ENCODE measurements at regions of chr1 and their contacts with region 1.

Region 1: DNA sequence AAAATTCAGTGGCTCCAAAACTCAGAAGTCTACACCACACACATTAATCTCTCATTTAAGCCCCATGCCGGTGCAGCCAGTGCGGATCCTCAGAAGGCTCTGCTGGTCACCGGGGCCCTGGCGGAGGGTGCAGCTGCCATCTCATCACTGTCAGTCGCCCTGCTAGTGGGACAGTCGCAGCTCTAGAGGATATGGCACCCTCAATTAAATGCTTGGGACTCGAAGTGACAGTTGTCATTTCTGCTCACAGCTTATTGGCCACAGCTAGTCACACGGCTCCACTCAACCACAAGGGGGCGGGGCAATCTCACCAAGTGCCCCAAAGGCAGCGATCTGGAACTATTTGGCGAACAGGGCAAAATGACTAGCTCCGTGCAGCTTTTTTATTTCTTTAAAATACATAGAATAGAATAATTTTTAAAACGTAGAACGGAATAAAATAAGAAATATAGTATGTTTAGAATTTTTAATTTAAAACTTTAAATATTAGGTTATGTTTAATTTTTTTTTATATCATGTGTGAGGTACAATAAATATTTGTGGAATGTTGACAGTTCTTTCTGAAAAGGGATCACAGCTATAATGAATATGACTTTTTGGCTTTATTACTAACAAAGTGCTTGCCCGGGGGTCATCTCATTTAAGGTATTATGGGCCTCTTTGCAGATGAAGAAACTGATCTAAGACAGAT is 8.0 kb upstream of the MAN1C1 start:
- DNase-seq: peak; percentile 45
- H3K4me3 ChIP-seq: peak overlapping the region in 2 of 3 experiments; percentile 38 to 43
- H3K27ac ChIP-seq: no peak overlapping the region
- H3K4me1 ChIP-seq: peaks cover 3% of the 10 kb centered on the region
- H3K27me3 ChIP-seq: no peaks in the 10 kb centered on the region
- CTCF ChIP-seq: peak; percentile 17 to 65

Region 2: DNA sequence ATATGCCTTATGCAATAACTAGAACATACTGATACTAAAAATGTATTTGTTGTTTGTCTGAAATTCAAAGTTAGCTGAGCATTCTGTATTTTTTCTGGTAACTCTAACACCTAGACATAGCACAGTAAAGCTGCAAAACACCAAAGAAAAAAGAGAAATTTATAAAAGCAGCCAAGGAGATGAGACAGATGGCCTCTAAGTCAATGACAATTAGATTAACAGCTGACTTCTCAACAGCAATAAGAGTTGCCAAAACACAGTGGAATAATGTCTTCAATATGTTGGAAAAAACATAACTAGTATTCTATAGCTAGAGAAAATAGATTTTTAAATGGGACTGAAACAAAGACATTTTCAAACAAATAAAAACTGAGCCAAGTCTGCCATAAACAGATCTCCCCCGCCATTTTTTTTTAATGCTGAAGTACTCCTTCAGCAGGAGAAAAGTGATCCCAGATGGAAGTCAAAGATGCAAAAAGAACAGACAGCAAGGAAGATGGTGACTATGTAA is 457.6 kb before region 1 on chr1:
- CTCF ChIA-PET with region 1: no interaction called
- dilution Hi-C with region 1: no loop called
- in situ Hi-C with region 1: no loop called
- intact Hi-C with region 1: no loop called
- DNase-seq: no peak
- H3K4me3 ChIP-seq: no peak overlapping the region
- H3K27ac ChIP-seq: no peak overlapping the region
- H3K4me1 ChIP-seq: peaks cover 6% of the 10 kb centered on the region
- H3K27me3 ChIP-seq: no peaks in the 10 kb centered on the region
- CTCF ChIP-seq: no peak

Region 3: GRCh38 chr1:25562101-25562927 is 46.3 kb before region 1 on chr1:
- CTCF ChIA-PET with region 1: no interaction called
- dilution Hi-C with region 1: loop called (anchors 5 kb)
- in situ Hi-C with region 1: no loop called
- intact Hi-C with region 1: no loop called
- DNase-seq: no peak
- H3K4me3 ChIP-seq: no peak overlapping the region
- H3K27ac ChIP-seq: no peak overlapping the region
- H3K4me1 ChIP-seq: peaks cover 52% of the 10 kb centered on the region
- H3K27me3 ChIP-seq: no peaks in the 10 kb centered on the region
- CTCF ChIP-seq: no peak